Activated naive CD8-positive, alpha-beta T cell treated with anti-CD3 and anti-CD28 coated beads, Interleukin-2, amount 10 ng/mL, durations not matched to agents 7 days and 5 days (primary cell): ENCODE measurements at regions of chr7 and their contacts with region 1.

Region 1: DNA sequence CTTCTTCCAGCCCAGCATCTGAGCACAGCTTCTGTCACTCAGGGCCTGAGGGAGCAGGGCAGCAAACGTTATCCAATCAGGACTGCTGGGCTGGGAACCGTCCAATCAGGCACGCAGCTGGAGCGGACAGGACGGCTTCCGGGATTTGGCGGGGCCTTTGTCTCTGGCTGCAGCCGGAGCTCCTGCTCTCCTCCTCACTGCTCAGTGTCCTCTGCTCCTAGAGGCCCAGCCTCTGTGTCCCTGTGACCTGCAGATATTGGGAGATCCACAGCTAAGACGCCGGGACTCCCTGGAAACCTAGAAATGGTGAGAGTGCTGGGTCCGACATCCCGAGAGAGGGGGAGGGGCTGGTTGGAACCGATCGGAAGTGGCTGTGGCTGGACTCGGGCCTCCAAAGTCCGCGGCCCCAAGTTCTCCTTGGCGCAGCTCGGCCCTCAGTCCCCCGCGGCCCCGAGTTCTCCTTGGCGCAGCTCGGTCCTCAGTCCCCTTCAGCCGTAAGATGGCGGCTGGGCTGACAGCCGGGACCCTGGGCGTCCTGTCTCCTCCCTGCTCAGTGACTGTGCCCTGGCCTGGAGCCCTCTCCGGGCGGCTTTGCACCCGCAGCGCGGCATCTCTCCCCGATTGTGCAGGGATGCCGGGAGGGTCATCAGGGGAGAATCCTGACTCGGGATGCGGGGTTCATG is at the start of gene ZNF107:
- DNase-seq: peak; percentile 81
- ATAC-seq: peak; percentile 100
- H3K4me3 Mint-ChIP-seq: peak within 1 kb of the TSS; percentile 96
- H3K27ac Mint-ChIP-seq: peak within 1 kb of the TSS; percentile 98
- H3K4me1 Mint-ChIP-seq: peaks cover 24% of the 10 kb centered on the region
- H3K27me3 Mint-ChIP-seq: no peaks in the 10 kb centered on the region
- total RNA-seq, gene ZNF107: 28.9 to 29.0 TPM

Region 2: DNA sequence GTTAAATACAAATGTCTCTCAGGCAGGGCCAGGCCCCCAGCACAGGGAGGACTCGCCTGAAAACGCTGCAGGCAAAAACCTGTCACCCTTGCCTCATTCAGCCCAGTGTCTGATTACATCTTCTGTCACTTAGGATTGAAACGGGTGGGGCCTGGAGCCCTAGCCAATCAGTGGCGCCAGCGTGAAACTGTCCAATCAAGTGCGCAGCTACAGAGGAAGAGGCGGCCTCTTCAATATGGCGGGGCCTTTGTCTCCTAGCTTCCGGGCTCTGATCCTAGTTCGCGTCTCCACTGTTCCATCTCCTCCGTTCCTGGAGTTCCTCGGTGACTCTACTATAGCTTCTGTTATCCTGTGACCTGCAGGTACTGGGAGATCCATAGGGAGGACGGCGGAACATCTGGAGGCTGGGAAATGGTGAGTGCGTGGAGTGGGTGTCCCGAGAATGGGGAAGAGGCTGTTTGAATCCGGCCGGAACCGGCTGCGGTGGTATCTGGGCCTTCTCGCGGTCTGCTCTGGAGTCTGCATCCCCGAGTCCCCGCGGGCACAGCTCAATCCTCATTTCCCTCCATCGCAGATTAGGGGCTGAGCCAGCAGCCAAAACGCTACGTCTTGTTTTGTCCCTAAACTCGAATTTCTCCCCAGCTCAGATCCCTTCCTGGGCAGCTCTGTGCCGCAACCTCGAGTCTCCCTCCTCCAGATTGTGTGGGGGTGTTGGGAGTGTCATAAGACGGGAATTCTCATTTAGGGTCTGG is 352.2 kb before region 1 on chr7 and contains the start of gene ZNF736:
- POLR2A ChIA-PET with region 1: interaction called, 15 read pairs
- DNase-seq: peak; percentile 80
- ATAC-seq: peak; percentile 100
- H3K4me3 Mint-ChIP-seq: peak within 1 kb of the TSS; percentile 99
- H3K27ac Mint-ChIP-seq: peak within 1 kb of the TSS; percentile 100
- H3K4me1 Mint-ChIP-seq: peaks cover 18% of the 10 kb centered on the region
- H3K27me3 Mint-ChIP-seq: no peaks in the 10 kb centered on the region
- total RNA-seq, gene ZNF736: 38.9 to 39.6 TPM

Region 3: DNA sequence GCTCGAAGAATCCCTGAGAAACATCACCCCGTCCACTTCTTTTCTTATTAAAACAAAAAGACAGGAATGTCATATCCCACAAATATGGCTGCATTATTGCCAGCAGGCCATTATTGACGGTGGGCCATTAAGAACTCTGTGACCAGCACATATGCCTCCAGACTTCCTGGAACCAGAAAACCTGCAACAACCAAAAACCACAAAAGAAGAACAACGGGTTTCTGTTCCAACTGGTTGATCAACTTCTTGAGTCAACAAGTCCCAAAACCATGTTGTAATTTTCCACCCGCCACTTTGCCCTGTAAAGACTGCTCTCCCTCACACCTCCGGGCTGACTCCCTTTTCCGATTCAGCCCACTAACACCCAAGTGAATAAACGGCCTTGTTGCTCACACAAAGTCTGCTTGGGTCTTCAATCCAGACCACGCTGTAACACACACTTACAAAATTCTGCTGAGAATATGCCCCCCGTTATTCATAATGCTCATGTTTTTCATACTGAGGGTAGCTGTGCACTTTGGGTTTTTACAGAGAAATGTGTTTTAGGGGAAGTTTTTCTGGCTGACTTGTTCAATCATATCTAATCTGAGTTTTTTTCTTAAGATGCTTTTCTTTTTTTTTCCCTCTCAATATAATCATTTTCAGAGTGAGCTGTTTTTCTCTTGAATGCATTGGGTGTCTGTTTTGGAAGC is 20.5 kb after region 1 on chr7:
- POLR2A ChIA-PET with region 1: interaction called, 11 read pairs
- DNase-seq: no peak
- ATAC-seq: no peak
- H3K4me3 Mint-ChIP-seq: peak overlapping the region; percentile 41
- H3K27ac Mint-ChIP-seq: peak overlapping the region; percentile 73
- H3K4me1 Mint-ChIP-seq: peaks cover 22% of the 10 kb centered on the region
- H3K27me3 Mint-ChIP-seq: no peaks in the 10 kb centered on the region

Region 4: GRCh38 chr7:65006094-65006992 is 340.2 kb after region 1 on chr7 and contains the start of gene ERV3-1:
- POLR2A ChIA-PET with region 1: interaction called, 13 read pairs
- DNase-seq: peak; percentile 83
- ATAC-seq: peak; percentile 100
- H3K4me3 Mint-ChIP-seq: peak within 1 kb of the TSS; percentile 95
- H3K27ac Mint-ChIP-seq: peak within 1 kb of the TSS; percentile 93
- H3K4me1 Mint-ChIP-seq: peaks cover 14% of the 10 kb centered on the region
- H3K27me3 Mint-ChIP-seq: no peaks in the 10 kb centered on the region
- total RNA-seq, gene ERV3-1: 16.9 to 17.3 TPM